ENCODE measurements at regions of chr19 and their contacts with region 1.

Region 1: DNA sequence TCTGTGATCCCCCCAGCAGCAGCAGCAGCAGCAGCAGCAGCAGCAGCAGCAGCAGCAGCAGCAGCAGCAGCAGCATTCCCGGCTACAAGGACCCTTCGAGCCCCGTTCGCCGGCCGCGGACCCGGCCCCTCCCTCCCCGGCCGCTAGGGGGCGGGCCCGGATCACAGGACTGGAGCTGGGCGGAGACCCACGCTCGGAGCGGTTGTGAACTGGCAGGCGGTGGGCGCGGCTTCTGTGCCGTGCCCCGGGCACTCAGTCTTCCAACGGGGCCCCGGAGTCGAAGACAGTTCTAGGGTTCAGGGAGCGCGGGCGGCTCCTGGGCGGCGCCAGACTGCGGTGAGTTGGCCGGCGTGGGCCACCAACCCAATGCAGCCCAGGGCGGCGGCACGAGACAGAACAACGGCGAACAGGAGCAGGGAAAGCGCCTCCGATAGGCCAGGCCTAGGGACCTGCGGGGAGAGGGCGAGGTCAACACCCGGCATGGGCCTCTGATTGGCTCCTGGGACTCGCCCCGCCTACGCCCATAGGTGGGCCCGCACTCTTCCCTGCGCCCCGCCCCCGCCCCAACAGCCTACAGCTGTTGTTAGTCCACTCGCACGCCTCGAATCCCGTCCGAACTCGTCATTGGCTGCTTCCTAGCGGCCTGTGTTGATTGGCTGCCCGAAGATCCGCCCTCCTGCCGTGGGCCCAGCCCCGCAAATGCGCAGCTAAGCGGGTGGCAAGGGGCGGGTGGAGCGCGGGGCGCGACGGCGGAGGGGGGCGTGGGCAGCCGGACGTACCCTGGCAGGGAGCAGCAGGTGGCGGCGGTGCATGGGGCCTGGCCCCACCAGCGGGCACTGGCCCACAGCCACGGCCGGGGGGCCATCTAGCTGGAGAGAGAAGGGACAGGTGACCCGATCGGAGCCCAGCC is 1.4 kb upstream of the SIX5 start:
- DNase-seq: peak; percentile 86
- H3K4me3 Mint-ChIP-seq: peak overlapping the region; percentile 86
- H3K27ac Mint-ChIP-seq: no peak overlapping the region
- H3K4me1 Mint-ChIP-seq: peaks cover 8% of the 10 kb centered on the region
- H3K27me3 Mint-ChIP-seq: peaks cover 12% of the 10 kb centered on the region

Region 2: DNA sequence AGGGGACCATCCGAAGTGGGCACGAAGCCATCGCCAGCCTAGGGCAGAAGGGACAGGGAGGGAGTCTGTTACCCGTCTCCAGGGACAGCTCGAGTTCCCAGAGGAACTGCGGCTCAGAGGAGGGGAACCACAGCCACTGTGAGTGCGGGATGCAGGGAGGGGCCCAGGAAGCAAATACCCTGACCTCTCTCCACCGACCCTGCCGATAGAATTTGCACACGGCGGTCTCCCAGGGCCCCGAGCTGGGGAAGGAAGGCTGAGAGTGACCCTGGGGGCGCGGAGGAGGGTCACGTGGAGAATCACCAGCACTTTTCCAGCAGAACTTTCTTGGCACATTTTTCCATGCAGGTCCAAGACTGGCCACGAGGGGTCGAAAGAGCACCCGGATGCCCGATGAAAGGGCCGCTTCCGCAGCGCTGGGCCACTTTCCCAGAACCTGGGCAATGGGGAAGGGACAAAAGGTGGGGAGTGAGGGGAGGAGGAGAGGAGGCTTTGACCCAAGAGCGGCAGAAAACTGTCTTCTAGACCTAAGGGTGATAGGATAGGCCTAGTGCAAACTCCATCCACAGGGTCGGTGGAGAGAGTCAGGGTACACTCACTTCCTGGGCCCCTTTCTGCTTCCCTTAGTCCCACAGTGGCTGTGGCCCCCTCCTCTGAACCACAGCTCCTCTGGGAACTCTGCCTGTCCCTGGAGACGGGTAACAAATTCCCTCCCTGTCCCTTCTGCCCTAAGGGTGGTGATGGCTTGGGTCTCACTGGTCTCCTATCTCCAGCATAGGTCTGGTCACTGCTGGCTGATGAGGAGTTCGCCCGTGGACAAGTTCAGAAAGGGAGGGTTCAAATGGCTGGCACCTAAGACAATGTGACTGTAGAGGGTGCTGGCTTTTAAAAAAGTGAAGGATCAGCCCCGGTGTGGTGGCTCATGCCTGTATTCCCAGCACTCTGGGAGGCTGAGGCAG is 163.1 kb before region 1 on chr19:
- intact Hi-C with region 1: no loop called
- DNase-seq: peak; percentile 24
- H3K4me3 Mint-ChIP-seq: no peak overlapping the region
- H3K27ac Mint-ChIP-seq: peak overlapping the region; percentile 88
- H3K4me1 Mint-ChIP-seq: peaks cover 12% of the 10 kb centered on the region
- H3K27me3 Mint-ChIP-seq: peaks cover 11% of the 10 kb centered on the region

Region 3: GRCh38 chr19:45792470-45793177 is 22.2 kb after region 1 on chr19 and contains the start of gene DMWD:
- intact Hi-C with region 1: loop called (anchors 2 kb)
- DNase-seq: peak; percentile 99
- H3K4me3 Mint-ChIP-seq: peak within 1 kb of the TSS; percentile 87
- H3K27ac Mint-ChIP-seq: peak within 1 kb of the TSS; percentile 72
- H3K4me1 Mint-ChIP-seq: peaks cover 27% of the 10 kb centered on the region
- H3K27me3 Mint-ChIP-seq: peaks cover 41% of the 10 kb centered on the region
- total RNA-seq, gene DMWD: 44.7 and 45.6 TPM in 2 replicates

Region 4: GRCh38 chr19:45798995-45799517 is 28.6 kb after region 1 on chr19:
- intact Hi-C with region 1: loop called (anchors 1 kb)
- DNase-seq: peak; percentile 33
- H3K4me3 Mint-ChIP-seq: no peak overlapping the region
- H3K27ac Mint-ChIP-seq: no peak overlapping the region
- H3K4me1 Mint-ChIP-seq: peaks cover 4% of the 10 kb centered on the region
- H3K27me3 Mint-ChIP-seq: peaks cover 37% of the 10 kb centered on the region

Measured in activated T-helper 2 cell treated with anti-CD3 and anti-CD28 coated beads, Interferon-gamma antibody, Interleukin-2, Interleukin-4, amounts not matched to agents 10 μg/mL and 5 μg/mL and 100 μg/mL, durations not matched to agents 14 hours and 24 hours and 36 hours (primary cell).